ENCODE measurements at regions of chr1 and their contacts with region 1.

Region 1: GRCh38 chr1:54121482-54122134 is 31.2 kb downstream of the CDCP2 start:
- DNase-seq: peak; percentile 96
- H3K4me3 ChIP-seq: peak overlapping the region in 1 of 2 experiments; percentile 37; a peak in 1 of 4 replicates
- H3K27ac ChIP-seq: peak overlapping the region in 1 of 2 experiments; percentile 40; a peak in 1 of 4 replicates
- H3K4me1 ChIP-seq: peaks cover 4 to 5% of the 10 kb centered on the region in 2 experiments; a peak in 2 of 4 replicates
- H3K27me3 ChIP-seq: no peaks in the 10 kb centered on the region
- CTCF ChIP-seq: peak; percentile 74
- EP300 ChIP-seq: no peak
- RAD21 ChIP-seq: peak; percentile 85

Region 2: GRCh38 chr1:53697721-53698383 is 423.8 kb before region 1 on chr1:
- CTCF ChIA-PET with region 1: no interaction called
- POLR2A ChIA-PET with region 1: no interaction called
- DNase-seq: no peak
- H3K4me3 ChIP-seq: no peak overlapping the region
- H3K27ac ChIP-seq: no peak overlapping the region
- H3K4me1 ChIP-seq: peaks cover 0 to 18% of the 10 kb centered on the region in 2 experiments; a peak in 1 of 4 replicates
- H3K27me3 ChIP-seq: no peaks in the 10 kb centered on the region
- CTCF ChIP-seq: no peak
- EP300 ChIP-seq: no peak
- RAD21 ChIP-seq: no peak

Region 3: DNA sequence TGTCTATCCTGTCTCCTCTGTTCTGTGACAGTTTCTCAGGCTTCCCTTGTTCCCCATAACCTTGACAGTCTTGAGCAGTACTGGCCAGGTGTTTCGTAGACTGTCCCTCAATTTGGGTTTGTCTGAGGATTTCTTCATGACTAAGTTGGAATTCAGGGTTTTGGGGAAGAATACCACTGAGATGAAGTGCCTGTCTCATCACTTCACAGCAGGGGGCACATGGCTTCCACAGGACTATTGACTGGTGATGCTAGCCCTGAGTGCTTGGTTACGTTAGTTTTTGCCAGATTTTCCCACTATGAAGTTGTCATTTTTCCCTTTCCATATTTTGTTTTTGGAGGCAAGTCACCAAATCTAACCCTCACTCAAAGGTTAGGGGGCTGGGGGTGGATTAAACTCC is 14.5 kb before region 1 on chr1:
- CTCF ChIA-PET with region 1: interaction called, 49 read pairs
- POLR2A ChIA-PET with region 1: no interaction called
- DNase-seq: no peak
- H3K4me3 ChIP-seq: no peak overlapping the region
- H3K27ac ChIP-seq: no peak overlapping the region
- H3K4me1 ChIP-seq: peaks cover 0 to 5% of the 10 kb centered on the region in 2 experiments; a peak in 1 of 4 replicates
- H3K27me3 ChIP-seq: no peaks in the 10 kb centered on the region
- CTCF ChIP-seq: peak; percentile 58
- EP300 ChIP-seq: no peak
- RAD21 ChIP-seq: peak; percentile 62

Region 4: GRCh38 chr1:54132495-54132894 is 10.9 kb after region 1 on chr1:
- CTCF ChIA-PET with region 1: interaction called, 37 read pairs
- POLR2A ChIA-PET with region 1: no interaction called
- DNase-seq: no peak
- H3K4me3 ChIP-seq: no peak overlapping the region
- H3K27ac ChIP-seq: no peak overlapping the region
- H3K4me1 ChIP-seq: peaks cover 0 to 20% of the 10 kb centered on the region in 2 experiments; a peak in 2 of 4 replicates
- H3K27me3 ChIP-seq: no peaks in the 10 kb centered on the region
- CTCF ChIP-seq: no peak
- EP300 ChIP-seq: no peak
- RAD21 ChIP-seq: no peak

Region 5: DNA sequence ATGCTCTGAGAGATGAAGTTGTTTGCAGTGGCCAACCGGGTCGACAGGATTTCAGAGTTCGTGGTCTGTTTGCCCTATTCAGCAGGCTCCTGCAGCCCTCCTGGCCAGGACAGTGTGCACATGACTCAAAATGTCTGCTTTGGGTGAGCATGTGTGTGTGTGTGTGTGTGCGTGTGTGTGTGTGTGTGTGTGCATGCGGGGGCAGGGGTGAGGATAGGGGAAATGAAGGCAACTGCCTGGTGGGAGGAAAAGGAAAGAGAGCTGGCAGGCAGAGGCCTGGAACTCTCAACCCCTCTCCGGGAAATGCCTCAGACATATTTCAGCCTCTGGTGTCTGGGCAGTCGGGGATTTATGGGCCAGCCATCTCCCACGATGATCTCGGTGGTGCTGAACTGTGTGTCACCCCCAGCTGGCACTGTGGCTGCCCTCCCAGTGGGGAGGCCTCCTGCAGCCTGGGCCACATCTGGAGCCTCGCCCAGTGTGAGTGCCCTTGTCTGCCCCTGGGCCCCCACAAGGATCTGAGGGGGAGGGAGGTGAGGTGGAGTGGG is 16.0 kb after region 1 on chr1:
- CTCF ChIA-PET with region 1: interaction called, 37 read pairs
- POLR2A ChIA-PET with region 1: no interaction called
- DNase-seq: peak; percentile 65
- H3K4me3 ChIP-seq: no peak overlapping the region
- H3K27ac ChIP-seq: peak overlapping the region in 1 of 2 experiments; percentile 51; a peak in 1 of 4 replicates
- H3K4me1 ChIP-seq: peaks cover 0 to 28% of the 10 kb centered on the region in 2 experiments; a peak in 2 of 4 replicates
- H3K27me3 ChIP-seq: no peaks in the 10 kb centered on the region
- CTCF ChIP-seq: no peak
- EP300 ChIP-seq: no peak
- RAD21 ChIP-seq: no peak

Measured in SK-N-SH (cell line).